Mammary epithelial cell (primary cell): ENCODE measurements at regions of chr2 and their contacts with region 1.

Region 1: DNA sequence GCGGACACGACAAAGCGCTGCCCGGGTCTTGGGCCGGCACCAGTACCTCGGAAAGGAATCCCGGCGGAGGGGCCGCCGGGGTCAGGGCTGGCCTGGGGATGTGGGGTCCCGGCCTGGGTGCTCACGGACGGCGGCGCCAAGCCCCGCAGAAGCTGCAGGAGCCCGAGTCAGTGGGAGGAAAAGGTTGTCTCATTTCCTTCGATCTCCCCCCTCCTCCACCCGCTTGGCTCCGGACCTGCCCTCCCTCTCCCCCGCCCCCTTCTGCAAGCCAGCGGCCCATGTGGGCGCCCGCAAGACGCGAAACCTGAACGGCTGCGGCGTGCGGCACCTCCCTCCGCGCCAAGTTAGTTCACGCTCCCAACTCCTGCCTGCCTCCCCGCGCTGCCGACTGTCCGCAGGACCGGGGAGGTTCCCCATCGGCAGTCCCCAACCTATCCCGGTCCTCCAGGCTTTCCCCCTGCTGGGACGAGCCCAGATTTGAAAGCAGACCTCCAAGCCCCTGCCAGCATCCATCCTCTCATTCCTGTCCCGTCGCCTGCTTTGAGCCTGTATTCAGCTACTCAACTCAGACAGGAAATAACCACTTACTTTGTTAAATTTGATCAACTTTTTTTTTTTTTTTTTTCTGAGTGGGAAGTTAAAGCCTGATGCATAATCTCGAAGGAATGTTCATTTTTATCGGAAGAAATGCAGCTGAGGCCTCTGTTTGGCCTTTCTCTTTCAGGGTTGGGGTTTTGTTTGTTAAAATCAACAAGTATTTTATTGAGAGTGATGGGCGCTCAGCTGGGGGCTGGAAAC is at the start of gene EVA1A:
- DNase-seq: peak; percentile 70
- H3K4me3 ChIP-seq: peak within 1 kb of the TSS; percentile 72 to 77 (median 75)
- H3K27ac ChIP-seq: peak within 1 kb of the TSS; percentile 61
- H3K4me1 ChIP-seq: peaks cover 30% of the 10 kb centered on the region
- H3K27me3 ChIP-seq: no peaks in the 10 kb centered on the region
- CTCF ChIP-seq: no peak
- total RNA-seq, gene EVA1A: 19.2 to 28.7 TPM

Region 2: DNA sequence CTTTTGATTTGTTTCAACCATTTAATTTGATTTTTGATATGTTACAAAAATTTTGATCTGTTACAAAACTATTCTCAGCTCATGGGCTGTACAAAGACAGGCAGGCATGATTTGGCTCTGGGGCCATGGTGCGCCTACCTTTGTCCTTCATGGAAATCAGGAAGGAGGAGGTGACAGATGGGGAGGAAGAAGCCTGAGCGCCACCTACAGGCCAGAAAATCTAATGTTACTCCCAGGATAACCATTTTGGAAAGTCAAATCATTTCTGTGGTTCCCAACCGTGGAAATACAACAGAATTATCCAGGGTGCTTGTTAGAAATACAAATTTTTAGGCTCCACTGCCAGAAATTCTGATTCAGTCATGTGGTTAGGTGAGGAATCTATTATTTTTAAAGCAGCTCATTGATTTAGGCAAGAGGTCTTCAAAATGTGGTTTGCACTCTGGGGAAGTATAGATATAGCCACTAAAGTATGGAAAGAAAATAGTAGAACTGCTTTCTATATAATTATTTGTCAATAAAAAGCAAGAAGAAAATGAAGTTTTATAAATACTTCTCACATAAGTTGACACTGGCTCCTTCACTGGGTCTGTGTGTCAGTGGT is 94.2 kb before region 1 on chr2:
- CTCF ChIA-PET with region 1: no interaction called
- dilution Hi-C with region 1: no loop called
- in situ Hi-C with region 1: loop called in 1 of 2 experiments (anchors 10 kb)
- intact Hi-C with region 1: loop called (anchors 1 kb)
- DNase-seq: peak; percentile 23
- H3K4me3 ChIP-seq: no peak overlapping the region
- H3K27ac ChIP-seq: no peak overlapping the region
- H3K4me1 ChIP-seq: no peaks in the 10 kb centered on the region
- H3K27me3 ChIP-seq: no peaks in the 10 kb centered on the region
- CTCF ChIP-seq: peak; percentile 59 to 72

Region 3: DNA sequence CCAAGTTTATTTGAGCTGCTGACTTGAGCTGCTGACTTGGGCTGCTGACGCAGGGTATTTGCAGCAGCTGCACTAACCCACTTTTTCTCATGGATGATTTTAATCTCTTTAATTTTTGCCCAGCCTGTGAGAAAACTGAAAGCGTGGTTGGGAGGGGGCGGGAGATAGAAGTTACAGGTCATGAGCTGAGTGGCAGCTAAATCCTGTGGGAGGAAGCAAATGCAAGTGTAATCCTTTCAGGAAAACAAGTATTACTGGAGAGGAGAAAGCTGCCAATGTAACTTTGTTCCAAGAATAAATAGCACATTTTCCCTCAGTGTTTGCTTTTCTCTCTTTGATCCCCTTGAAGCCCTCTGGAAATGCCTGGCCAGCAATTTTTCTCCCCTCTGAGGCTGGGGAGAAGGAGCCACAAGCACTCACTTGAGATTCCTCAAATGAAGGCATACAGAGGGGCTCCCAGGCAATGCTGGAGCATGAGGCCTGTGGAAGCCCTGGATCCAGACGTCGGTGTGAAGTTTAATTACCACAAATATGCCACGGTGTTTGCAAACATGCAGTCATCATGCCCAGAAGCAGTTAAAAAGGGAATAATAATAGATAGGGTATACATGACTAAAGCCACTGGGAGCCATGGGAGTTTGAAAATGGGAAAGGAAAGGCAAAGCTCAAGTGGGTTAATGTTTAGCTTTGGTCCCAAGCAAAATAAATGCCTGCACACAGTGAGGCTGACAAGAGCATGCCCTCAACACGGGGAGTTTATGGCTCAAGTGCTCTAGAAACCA is 10.2 kb after region 1 on chr2:
- CTCF ChIA-PET with region 1: no interaction called
- dilution Hi-C with region 1: no loop called
- in situ Hi-C with region 1: no loop called
- intact Hi-C with region 1: loop called (anchors 1 kb)
- DNase-seq: no peak
- H3K4me3 ChIP-seq: no peak overlapping the region
- H3K27ac ChIP-seq: no peak overlapping the region
- H3K4me1 ChIP-seq: peaks cover 49% of the 10 kb centered on the region
- H3K27me3 ChIP-seq: no peaks in the 10 kb centered on the region
- CTCF ChIP-seq: no peak